GM12878 (cell line): ENCODE measurements at regions of chr7 and their contacts with region 1.

Region 1: DNA sequence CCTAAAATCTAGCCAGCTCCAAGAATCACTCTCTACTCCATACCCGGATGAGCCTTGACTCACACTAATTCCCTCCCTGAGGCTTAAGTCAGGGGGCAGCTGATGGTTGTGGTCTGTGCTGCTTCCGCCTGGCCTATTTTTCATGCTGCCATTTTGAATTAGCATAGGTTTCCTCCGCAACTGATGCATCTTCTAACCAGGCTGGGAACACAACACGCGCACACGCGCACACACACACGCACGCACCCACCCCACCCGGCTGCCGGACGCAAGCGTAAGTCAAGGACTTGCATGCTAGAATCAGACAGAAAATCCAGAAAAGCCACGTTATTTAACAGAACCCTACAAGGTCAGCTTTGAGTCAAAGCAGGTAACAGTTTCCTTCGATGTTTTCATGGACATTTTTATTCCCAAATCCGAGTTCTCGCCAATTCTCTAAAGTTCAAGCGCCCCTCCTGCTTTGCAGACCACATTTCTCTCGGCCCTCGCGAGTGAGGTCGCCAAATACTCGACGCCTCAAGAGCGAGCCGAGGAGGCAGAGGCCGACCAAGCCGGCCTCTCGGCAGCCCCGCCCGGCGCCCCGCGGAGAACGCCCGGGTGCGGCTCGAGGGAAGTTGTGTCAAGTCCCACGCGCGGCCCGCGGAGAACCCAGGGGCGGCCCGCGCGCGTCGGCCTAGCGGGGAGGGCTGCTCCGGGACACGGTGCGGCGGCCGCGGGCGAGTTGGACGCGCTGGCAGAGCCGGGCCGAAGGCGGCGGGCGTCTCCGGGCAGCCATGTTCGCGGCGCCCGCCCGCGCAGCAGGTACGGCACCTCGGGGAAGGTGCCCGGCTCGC is 961 bp downstream of the SCRN1 start:
- DNase-seq: peak; percentile 63
- ATAC-seq: peak; percentile 66
- H3K4me3 ChIP-seq: peak overlapping the region; percentile 85
- H3K27ac ChIP-seq: peak overlapping the region; percentile 89
- H3K4me1 ChIP-seq: peaks cover 9% of the 10 kb centered on the region; the same call in 1 of the 2 replicates
- H3K27me3 ChIP-seq: no peaks in the 10 kb centered on the region
- CTCF ChIP-seq: no peak
- EP300 ChIP-seq: no peak
- POLR2A ChIP-seq: peak; percentile 63
- RAD21 ChIP-seq: no peak

Region 2: DNA sequence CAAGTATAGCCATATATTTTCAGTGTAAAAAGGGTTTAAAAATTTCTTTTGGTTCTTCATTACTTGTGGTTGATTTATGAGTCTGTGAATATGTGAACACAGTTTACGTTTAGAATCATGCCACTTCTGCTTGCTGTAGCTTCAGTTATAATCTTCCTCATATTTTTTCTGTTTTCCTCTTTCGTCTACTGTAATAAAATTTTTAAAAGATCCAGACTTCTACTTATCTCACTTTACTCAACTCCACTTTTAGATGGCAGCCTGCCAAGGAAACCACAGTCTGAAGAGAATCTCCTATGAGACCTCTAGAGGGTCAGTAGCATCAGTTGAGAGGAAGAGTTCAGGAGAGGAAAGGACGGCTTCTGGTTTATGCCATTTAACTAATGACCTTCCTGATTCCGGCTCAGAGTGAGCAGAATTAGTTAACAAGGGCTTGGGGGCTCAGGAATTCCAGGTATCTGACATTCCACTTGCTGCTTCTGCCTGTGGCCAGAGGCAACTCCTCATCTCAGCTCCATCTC is 1554.9 kb before region 1 on chr7:
- CTCF ChIA-PET with region 1: no interaction called
- POLR2A ChIA-PET with region 1: no interaction called
- RAD21 ChIA-PET with region 1: no interaction called
- SMC1A ChIA-PET with region 1: no interaction called
- in situ Hi-C with region 1: no loop called
- intact Hi-C with region 1: no loop called
- DNase-seq: no peak
- ATAC-seq: peak; percentile 49
- H3K4me3 ChIP-seq: no peak overlapping the region
- H3K27ac ChIP-seq: no peak overlapping the region
- H3K4me1 ChIP-seq: no peaks in the 10 kb centered on the region
- H3K27me3 ChIP-seq: no peaks in the 10 kb centered on the region
- CTCF ChIP-seq: no peak
- EP300 ChIP-seq: no peak
- POLR2A ChIP-seq: no peak
- RAD21 ChIP-seq: no peak

Region 3: DNA sequence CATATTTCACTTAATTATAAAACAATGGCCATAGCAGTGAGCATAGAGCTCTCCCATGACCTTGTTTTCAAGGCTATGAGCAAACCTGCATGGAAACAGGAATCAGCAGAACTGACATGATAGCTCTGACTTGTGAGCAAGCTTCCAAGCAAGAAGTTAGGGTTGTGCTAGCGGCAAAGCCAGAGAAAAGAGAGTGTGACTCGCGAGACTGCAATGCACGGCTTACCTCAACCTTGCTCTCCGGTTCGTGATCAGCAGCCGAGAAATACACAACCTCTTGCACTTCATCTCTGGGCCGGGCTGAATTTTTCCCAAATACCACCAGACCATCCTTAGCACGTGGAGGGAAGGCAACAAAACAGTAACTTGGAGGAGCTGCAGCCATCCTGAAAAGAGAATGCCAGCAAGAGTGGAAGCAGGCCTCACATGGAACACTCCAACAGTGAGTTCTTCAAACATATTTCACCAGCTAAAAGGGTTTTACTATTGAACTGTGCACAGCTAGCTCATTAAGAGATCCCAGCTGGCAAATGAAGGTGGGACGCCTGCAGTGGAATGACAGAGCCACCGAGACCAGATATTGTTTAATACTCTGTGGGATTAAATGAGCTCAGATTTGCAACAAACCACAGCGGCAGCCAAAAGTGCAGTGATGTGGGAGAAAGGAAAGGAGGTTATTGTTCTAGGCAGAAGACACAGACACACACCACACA is 19.8 kb before region 1 on chr7:
- CTCF ChIA-PET with region 1: interaction called, 4 read pairs
- POLR2A ChIA-PET with region 1: interaction called, 12 read pairs
- RAD21 ChIA-PET with region 1: interaction called, 3 read pairs
- SMC1A ChIA-PET with region 1: interaction called, 3 read pairs
- in situ Hi-C with region 1: no loop called
- intact Hi-C with region 1: no loop called
- DNase-seq: no peak
- ATAC-seq: no peak
- H3K4me3 ChIP-seq: no peak overlapping the region
- H3K27ac ChIP-seq: no peak overlapping the region
- H3K4me1 ChIP-seq: no peaks in the 10 kb centered on the region
- H3K27me3 ChIP-seq: no peaks in the 10 kb centered on the region
- CTCF ChIP-seq: no peak
- EP300 ChIP-seq: no peak
- POLR2A ChIP-seq: no peak
- RAD21 ChIP-seq: no peak

Region 4: GRCh38 chr7:30026229-30027064 is 37.8 kb after region 1 on chr7 and contains the start of gene FKBP14:
- CTCF ChIA-PET with region 1: interaction called, 5 read pairs
- POLR2A ChIA-PET with region 1: interaction called, 15 read pairs
- RAD21 ChIA-PET with region 1: interaction called, 9 read pairs
- SMC1A ChIA-PET with region 1: interaction called, 7 read pairs
- in situ Hi-C with region 1: no loop called
- intact Hi-C with region 1: loop called (anchors 2 kb)
- DNase-seq: peak; percentile 94
- ATAC-seq: peak; percentile 85
- H3K4me3 ChIP-seq: peak within 1 kb of the TSS; percentile 76
- H3K27ac ChIP-seq: peak within 1 kb of the TSS; percentile 77
- H3K4me1 ChIP-seq: no peaks in the 10 kb centered on the region; the same call in 1 of the 2 replicates
- H3K27me3 ChIP-seq: no peaks in the 10 kb centered on the region
- CTCF ChIP-seq: no peak
- EP300 ChIP-seq: 0 out of 4 replicates have a peak, but pooled peaks of 1 of the 2 experiments have one; percentile 35
- POLR2A ChIP-seq: peak; percentile 81
- RAD21 ChIP-seq: no peak
- polyA plus RNA-seq, gene FKBP14: 2.7 to 3.7 TPM